Cardiac septum (tissue), 1 donor: ENCODE measurements at regions of chr22 and their contacts with region 1.

Region 1: GRCh38 chr22:42662114-42663021 is 13.2 kb upstream of the CYB5R3 start:
- DNase-seq: peak; percentile 92

Region 2: GRCh38 chr22:42243802-42244060 is 418.6 kb before region 1 on chr22:
- intact Hi-C with region 1: no loop called
- DNase-seq: no peak

Region 3: GRCh38 chr22:42621505-42622002 is 40.8 kb before region 1 on chr22:
- intact Hi-C with region 1: loop called (anchors 5 kb)
- DNase-seq: no peak

Region 4: GRCh38 chr22:42743501-42743991 is 81.2 kb after region 1 on chr22:
- intact Hi-C with region 1: loop called (anchors 2 kb)
- DNase-seq: peak; percentile 93

Region 5: GRCh38 chr22:42780070-42780540 is 117.7 kb after region 1 on chr22:
- intact Hi-C with region 1: loop called (anchors 1 kb)
- DNase-seq: no peak

Region 6: GRCh38 chr22:42794551-42795510 is 132.5 kb after region 1 on chr22:
- intact Hi-C with region 1: loop called (anchors 5 kb)
- DNase-seq: peak; percentile 57

Region 7: GRCh38 chr22:42820066-42820763 is 157.8 kb after region 1 on chr22:
- intact Hi-C with region 1: loop called (anchors 2 kb)
- DNase-seq: no peak